ENCODE measurements at regions of chr17 and their contacts with region 1.

Region 1: DNA sequence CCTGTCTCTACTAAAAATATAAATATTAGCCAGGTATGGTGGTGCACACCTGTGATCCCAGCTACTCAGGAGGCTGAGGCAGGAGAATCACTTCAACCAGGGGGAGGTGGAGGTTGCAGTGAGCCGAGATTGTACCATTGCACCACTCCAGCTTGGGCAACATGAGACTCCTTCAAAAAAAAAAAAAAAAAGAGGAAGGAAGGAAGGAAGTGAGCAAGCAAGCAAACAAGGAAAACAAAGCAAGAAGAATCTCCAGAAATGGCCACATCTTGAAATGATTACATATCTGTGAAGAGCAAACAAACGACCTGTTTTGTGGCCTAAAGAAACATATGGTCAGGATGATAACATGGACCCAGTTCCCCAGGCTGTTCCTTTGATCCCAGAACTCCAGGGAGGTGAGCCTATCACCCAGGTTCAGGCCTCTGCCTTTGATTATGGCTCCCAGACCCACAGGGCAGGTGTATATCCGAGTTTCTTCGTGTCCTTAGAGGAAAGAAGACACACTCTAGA is 8.9 kb downstream of the ACOX1 start:
- DNase-seq: peak in 1 of 2 experiments; percentile 51
- H3K4me3 ChIP-seq: no peak overlapping the region
- H3K27ac ChIP-seq: peak overlapping the region; percentile 56
- H3K4me1 ChIP-seq: peaks cover 10% of the 10 kb centered on the region
- H3K27me3 ChIP-seq: no peaks in the 10 kb centered on the region
- CTCF ChIP-seq: no peak

Region 2: DNA sequence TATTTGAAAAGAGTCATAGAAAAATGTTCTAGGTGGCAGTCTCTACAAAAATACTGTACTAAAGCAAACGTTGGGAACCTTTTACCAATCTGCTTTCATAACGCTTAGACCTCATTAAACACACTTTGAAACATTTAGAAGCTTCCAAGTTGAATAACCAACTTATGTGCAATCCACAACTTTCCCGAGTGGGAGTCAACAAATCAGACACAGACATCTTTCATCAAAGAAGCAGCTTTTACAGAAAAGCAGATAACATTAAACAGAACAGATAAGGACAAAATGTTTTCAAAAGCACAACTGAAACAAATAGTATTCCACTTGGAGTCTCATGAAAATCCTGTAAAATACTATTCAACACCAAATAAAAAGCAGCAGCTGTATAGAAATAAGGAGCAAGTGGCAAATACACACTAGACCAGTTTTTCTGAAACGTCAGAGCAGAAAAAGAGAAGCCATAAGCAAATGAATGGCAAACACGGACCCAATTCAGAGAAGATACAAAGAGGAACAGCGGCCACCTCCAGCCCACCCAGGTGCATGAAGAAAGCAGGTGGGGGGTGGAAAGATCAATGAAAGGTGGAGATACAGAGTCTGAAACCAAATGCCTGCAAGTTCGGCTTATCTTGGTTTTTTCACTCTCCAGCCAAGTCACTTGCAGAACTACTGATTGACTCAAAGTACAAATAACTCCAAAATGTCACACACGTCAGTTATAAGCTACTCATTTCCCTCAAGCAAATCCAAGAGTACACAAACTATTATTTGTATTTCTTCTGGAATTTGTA is 10.8 kb before region 1 on chr17:
- CTCF ChIA-PET with region 1: interaction called, 11 read pairs
- POLR2A ChIA-PET with region 1: no interaction called
- intact Hi-C with region 1: no loop called
- DNase-seq: no peak
- H3K4me3 ChIP-seq: no peak overlapping the region
- H3K27ac ChIP-seq: no peak overlapping the region
- H3K4me1 ChIP-seq: no peaks in the 10 kb centered on the region
- H3K27me3 ChIP-seq: no peaks in the 10 kb centered on the region
- CTCF ChIP-seq: no peak

Measured in PC-9 (cell line).